ENCODE measurements at regions of chr19 and their contacts with region 1.

Region 1: DNA sequence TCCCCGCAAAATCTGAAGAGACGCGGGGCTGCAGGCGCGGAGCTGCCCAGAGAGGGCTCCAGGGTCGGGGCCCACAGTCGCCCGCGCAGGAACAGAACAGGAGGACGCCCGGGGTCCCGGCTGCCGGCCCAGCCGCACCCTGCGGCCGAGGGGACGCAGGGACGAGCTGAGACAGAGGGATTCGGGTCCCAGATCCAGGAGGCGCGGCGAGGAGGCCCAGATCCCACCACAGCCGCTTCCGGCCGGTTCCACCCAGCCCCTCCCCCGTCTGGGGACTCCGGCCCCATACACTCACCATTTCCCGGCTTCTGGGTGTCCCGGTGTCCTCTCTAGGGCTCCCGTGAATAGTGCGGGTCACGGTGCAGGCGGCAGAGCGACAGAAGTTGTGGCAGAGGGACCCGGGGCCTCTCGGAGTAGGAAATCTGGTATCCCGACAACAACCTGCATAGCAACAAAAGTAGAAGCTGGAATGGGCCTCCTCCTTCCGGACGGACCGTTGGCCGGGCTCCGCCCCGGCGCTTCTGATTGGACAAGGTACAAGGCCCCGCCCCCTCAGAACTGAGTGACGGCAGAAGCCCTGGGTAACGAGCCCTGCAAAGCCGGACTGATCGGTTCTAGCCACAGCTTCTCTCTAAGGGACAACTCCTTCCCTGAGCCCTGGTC is at the start of gene ZNF20:
- DNase-seq: peak; percentile 59
- H3K4me3 ChIP-seq: peak within 1 kb of the TSS; percentile 72 to 94 (median 84)
- H3K27ac ChIP-seq: peak within 1 kb of the TSS; percentile 82 to 90 (median 84)
- H3K4me1 ChIP-seq: peaks cover 17 to 35% (median 19%) of the 10 kb centered on the region in 3 donors
- H3K27me3 ChIP-seq: no peaks in the 10 kb centered on the region
- CTCF ChIP-seq: no peak
- POLR2A ChIP-seq: peak in 1 of 4 donors; percentile 9
- total RNA-seq, gene ZNF20: 2.6 to 5.2 (median 3.8) TPM

Region 2: DNA sequence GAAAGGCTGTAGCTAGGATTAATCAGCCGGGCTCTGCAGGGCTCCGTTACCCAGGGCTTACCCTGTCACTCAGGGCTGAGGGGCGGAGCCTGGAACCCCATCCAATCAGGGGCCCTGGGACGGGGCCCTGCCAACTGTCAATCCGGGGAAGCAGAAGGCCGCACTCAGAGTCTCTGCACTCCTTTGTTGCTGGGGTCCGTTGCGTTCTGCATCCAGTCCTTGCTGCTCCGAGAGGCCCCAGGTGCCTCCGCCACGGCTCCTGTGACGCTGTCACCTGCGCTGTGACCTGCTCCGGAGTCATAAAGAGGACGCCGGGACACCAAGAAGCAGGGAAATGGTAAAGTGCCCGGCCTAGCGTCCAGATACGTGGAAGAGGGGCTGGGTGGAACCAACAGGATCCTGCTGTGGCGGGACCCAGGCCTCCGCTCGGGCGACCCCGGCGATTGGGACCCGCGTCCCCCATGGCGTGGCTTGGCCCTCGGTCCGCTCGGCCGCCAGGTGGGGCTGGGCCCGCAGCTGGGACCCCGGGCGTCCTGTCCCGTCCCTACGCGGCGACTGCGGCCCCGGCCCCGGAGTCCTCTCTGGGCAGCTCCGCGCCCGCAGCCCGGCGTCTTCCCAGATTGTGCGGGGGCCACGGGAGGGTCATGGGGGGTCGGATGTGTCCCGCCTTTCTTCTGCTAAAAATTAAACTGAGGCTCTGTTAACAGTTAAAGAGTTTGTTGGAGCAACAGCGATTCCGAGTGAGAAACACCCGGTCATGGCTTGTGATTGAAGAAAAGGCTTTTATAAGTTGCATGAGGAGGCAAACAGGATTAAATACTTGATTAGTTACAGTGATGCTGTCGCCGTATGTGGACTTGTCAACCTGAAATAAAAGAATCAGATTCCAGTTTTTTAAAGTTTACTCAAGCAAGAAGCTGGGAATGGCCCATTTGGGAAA is 341.4 kb before region 1 on chr19 and contains the start of gene ZNF491:
- intact Hi-C with region 1: loop called (anchors 5 kb)
- DNase-seq: peak; percentile 26
- H3K4me3 ChIP-seq: peak within 1 kb of the TSS; percentile 61 to 82 (median 64)
- H3K27ac ChIP-seq: peak within 1 kb of the TSS; percentile 64 to 87 (median 81)
- H3K4me1 ChIP-seq: peaks cover 7 to 26% (median 11%) of the 10 kb centered on the region in 3 donors
- H3K27me3 ChIP-seq: no peaks in the 10 kb centered on the region
- CTCF ChIP-seq: peak in 4 of 6 experiments; percentile 10 to 32 (median 27)
- POLR2A ChIP-seq: peak in 2 of 4 donors; percentile 48 to 75
- total RNA-seq, gene ZNF491: 0.13 to 2.3 (median 0.82) TPM

Region 3: GRCh38 chr19:12036154-12036535 is 103.9 kb before region 1 on chr19:
- intact Hi-C with region 1: no loop called
- DNase-seq: no peak
- H3K4me3 ChIP-seq: peak overlapping the region; percentile 81 to 89 (median 85)
- H3K27ac ChIP-seq: peak overlapping the region; percentile 91 to 95 (median 91)
- H3K4me1 ChIP-seq: peaks cover 5 to 27% (median 13%) of the 10 kb centered on the region in 3 donors
- H3K27me3 ChIP-seq: no peaks in the 10 kb centered on the region
- CTCF ChIP-seq: no peak
- POLR2A ChIP-seq: no peak

Region 4: DNA sequence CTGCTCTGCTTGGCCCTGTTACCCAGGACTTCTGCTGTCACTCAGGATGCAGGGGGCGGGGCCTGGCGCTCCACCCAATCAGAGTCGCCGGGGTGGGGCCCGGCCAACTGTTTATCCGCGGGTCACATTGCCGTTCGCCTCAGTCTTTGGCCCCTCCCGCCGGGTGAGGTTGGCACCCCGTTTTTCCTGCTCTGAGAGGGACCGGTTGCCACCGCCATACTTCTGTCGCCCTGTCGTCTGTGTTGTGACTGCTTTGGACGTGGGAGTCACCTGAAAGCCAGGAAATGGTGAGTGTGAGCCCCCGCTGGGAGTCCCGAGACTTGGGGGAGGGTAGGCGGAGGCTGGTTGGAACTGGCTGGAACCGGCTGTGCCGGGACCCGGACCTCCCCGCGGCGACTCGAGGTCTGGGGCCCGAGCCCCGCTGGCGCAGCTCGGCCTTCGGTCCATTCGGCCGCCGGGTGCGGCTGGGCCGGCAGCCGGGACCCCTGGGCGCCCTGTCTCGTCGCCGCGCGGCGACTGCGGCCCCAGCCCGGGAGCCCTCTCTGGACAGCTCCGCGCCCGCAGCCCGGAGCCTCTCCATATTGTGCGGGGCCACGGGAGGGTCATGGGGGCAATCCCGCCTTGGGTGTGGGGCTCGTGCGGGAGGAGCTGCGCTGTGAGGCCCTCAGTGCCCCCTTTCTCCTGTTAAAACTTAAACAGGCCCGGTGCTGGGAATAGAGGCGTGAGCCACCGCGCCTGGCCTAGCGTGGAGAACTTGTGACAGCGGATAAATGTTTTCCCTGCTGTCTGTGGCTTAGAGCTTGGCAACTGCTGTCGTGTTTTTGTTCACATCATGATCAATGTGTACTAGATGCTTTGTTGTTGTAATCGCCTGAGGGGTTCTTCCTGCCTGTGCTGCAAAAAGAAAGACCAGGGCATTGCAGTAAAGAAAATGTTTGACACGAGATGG is 75.2 kb before region 1 on chr19 and contains the start of gene ZNF844:
- intact Hi-C with region 1: loop called (anchors 2 kb)
- DNase-seq: peak; percentile 61
- H3K4me3 ChIP-seq: peak within 1 kb of the TSS; percentile 66 to 97 (median 84)
- H3K27ac ChIP-seq: peak within 1 kb of the TSS; percentile 90 to 95 (median 95)
- H3K4me1 ChIP-seq: peaks cover 0 to 24% (median 0%) of the 10 kb centered on the region in 3 donors
- H3K27me3 ChIP-seq: no peaks in the 10 kb centered on the region
- CTCF ChIP-seq: no peak
- POLR2A ChIP-seq: peak in 3 of 4 donors; percentile 47 to 91 (median 89)
- total RNA-seq, gene ZNF844: 2.9 to 6.3 (median 3.8) TPM

Measured in esophagus squamous epithelium (tissue), 5 donors.